Panc1 (cell line): ENCODE measurements at regions of chr1 and their contacts with region 1.

Region 1: DNA sequence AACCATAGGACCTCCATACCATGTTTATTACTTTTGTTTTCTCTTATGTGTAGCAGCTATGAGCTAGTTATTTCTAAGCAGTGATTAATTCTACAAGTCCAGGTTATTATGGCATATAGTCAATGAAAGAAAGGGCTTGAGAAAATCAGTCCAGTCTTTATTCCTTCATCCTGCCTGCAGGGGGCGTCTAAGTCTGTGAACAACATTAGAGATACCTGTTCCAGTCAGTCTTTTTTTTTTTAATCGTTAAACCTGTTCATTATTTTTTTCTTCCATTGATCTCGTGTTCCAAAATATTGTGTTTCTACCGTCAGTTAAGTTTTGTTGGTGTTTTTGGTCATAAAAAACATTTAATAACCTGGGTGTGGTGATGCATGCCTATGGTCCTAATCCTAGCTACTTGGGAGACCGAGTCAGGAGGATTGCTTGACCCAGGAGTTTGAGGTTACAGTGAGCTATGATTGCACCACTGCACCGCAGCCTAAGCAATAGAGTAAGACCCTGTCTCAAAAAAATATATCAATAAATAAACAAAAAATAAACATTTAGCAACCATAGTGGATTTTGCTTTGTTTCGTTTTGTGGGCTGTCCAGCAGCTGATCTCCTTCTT is 29.4 kb upstream of the CD2 start:
- DNase-seq: peak; percentile 22
- ATAC-seq: no peak
- H3K4me3 ChIP-seq: no peak overlapping the region
- H3K27ac ChIP-seq: no peak overlapping the region
- H3K4me1 ChIP-seq: no peaks in the 10 kb centered on the region
- H3K27me3 ChIP-seq: no peaks in the 10 kb centered on the region
- CTCF ChIP-seq: peak; percentile 76

Region 2: GRCh38 chr1:116697548-116698243 is 27.2 kb before region 1 on chr1:
- CTCF ChIA-PET with region 1: no interaction called
- POLR2A ChIA-PET with region 1: interaction called, 16 read pairs
- in situ Hi-C with region 1: no loop called
- intact Hi-C with region 1: no loop called
- DNase-seq: no peak
- ATAC-seq: no peak
- H3K4me3 ChIP-seq: no peak overlapping the region
- H3K27ac ChIP-seq: no peak overlapping the region
- H3K4me1 ChIP-seq: no peaks in the 10 kb centered on the region
- H3K27me3 ChIP-seq: no peaks in the 10 kb centered on the region
- CTCF ChIP-seq: no peak

Region 3: GRCh38 chr1:116710420-116711262 is 14.2 kb before region 1 on chr1:
- CTCF ChIA-PET with region 1: no interaction called
- POLR2A ChIA-PET with region 1: no interaction called
- in situ Hi-C with region 1: no loop called
- intact Hi-C with region 1: no loop called
- DNase-seq: no peak
- ATAC-seq: no peak
- H3K4me3 ChIP-seq: no peak overlapping the region
- H3K27ac ChIP-seq: no peak overlapping the region
- H3K4me1 ChIP-seq: no peaks in the 10 kb centered on the region
- H3K27me3 ChIP-seq: no peaks in the 10 kb centered on the region
- CTCF ChIP-seq: no peak

Region 4: DNA sequence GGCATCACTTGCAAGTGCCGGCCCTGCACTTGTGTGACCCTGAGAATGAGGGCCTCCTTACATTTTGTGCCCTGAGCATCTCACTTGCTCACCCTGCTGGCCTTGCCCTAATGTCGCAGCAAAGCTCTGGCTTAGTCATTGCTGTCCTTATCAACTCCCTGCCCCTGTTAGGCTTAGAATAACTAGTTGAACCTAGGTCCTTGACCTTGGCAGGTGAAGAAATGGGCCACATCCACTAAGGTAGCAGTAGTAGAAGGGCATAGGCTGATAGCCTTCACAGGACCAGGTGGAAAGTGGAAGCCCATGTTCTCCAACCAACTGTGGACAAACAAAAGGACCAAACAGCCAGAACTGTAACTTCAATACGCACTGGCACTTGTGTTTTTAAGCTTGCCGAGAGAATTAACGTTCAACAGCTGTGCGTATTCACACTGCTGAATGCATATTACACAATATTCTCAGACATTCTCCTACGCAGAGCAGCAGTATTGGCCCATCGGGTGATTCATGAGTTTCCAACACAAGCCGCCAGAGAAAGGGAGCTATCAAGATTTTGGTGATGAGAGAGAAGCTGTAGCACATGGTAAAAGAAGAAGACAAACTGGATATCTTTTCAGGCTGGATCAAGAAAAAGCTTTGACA is 157.1 kb after region 1 on chr1:
- CTCF ChIA-PET with region 1: interaction called, 11 read pairs
- POLR2A ChIA-PET with region 1: no interaction called
- in situ Hi-C with region 1: no loop called
- intact Hi-C with region 1: no loop called
- DNase-seq: peak; percentile 5
- ATAC-seq: no peak
- H3K4me3 ChIP-seq: no peak overlapping the region
- H3K27ac ChIP-seq: no peak overlapping the region
- H3K4me1 ChIP-seq: peaks cover 3% of the 10 kb centered on the region
- H3K27me3 ChIP-seq: no peaks in the 10 kb centered on the region
- CTCF ChIP-seq: peak; percentile 52

Region 5: DNA sequence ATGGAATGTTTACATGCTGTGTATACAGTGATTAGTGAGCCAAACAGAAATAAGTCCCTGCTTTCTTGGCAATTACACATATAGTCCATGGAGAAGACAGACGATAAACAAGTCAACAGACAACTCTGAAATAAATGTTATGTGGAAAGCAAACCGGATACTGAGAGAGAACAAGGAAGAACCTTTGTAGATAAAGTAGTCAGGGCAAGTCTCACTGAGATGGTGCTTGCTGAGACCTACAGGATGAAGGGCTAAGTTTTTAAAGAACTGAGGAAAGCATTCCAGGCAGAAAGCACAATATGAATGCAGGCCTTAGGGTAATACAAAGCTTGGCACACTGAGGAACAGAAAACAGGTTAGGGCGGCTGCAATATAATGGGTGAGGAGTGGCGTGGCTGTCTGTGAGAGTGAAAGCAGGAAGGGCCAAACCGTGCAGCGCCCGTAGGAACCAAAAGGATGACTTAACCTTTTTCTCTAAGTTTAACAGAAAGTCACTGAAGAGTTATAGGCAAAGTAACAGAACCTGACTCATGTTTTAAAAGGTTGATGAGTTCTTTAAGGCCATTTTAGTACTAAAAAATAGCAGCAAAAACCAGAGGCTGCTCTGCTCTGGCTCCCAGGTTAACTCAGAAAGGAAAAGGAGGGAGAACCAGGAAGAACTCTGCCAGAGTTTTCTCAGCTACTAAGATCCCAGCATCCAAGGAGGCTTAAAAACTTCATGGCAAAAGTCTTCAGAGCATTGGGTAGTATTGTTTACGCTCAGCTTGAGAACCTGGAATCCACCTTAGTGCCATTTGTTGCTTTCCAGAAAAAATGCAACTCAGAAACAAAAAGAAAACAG is 326.6 kb after region 1 on chr1:
- CTCF ChIA-PET with region 1: interaction called, 10 read pairs
- POLR2A ChIA-PET with region 1: no interaction called
- in situ Hi-C with region 1: no loop called
- intact Hi-C with region 1: loop called (anchors 5 kb)
- DNase-seq: no peak
- ATAC-seq: peak; percentile 78
- H3K4me3 ChIP-seq: peak overlapping the region; percentile 1 to 7; a peak in 2 of 4 replicates
- H3K27ac ChIP-seq: peak overlapping the region; percentile 63
- H3K4me1 ChIP-seq: no peaks in the 10 kb centered on the region
- H3K27me3 ChIP-seq: no peaks in the 10 kb centered on the region
- CTCF ChIP-seq: no peak